Caco-2 (cell line): ENCODE measurements at regions of chr12 and their contacts with region 1.

Region 1: DNA sequence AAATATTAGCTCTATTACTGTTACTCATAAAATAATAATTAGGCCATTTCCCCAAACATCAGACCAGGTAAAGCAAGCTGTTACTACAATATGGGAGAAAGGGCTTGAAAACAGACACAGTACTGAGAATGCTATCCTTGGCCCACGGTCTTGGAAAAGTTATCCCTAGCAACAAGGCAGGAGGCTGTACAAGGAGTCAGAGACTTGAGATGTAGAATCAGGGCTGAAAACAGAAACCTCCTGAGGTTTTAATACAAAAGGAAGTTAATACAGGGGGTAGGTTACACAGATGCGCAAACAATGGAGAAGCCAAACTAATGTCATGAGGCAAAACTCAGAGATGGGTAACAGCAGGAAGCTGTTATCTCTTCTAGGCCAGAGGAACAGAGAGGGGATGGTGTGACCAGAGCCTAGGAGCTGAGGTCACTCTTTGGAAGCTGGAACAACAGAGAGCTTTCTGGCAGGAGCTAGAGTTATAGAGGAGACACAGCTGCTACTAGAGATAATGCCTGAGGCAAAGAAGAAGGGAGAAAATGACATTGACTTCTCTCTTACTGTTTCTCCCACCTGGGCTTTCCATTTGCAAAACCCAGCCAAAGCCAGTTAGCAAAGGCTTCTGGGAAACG is 248.8 kb downstream of the SUDS3 start:
- DNase-seq: no peak
- H3K4me3 ChIP-seq: no peak overlapping the region
- H3K4me3 Mint-ChIP-seq: no peak overlapping the region
- H3K27ac Mint-ChIP-seq: no peak overlapping the region
- H3K4me1 ChIP-seq: no peaks in the 10 kb centered on the region
- H3K4me1 Mint-ChIP-seq: no peaks in the 10 kb centered on the region
- H3K27me3 ChIP-seq: no peaks in the 10 kb centered on the region
- H3K27me3 Mint-ChIP-seq: peaks cover 14% of the 10 kb centered on the region
- CTCF ChIP-seq: no peak

Region 2: GRCh38 chr12:118404876-118405521 is 220.2 kb before region 1 on chr12:
- CTCF ChIA-PET with region 1: no interaction called
- POLR2A ChIA-PET with region 1: no interaction called
- intact Hi-C with region 1: loop called (anchors 1 kb)
- DNase-seq: peak; percentile 55 to 58
- H3K4me3 ChIP-seq: no peak overlapping the region
- H3K4me3 Mint-ChIP-seq: no peak overlapping the region
- H3K27ac Mint-ChIP-seq: no peak overlapping the region
- H3K4me1 ChIP-seq: no peaks in the 10 kb centered on the region
- H3K4me1 Mint-ChIP-seq: no peaks in the 10 kb centered on the region
- H3K27me3 ChIP-seq: no peaks in the 10 kb centered on the region
- H3K27me3 Mint-ChIP-seq: no peaks in the 10 kb centered on the region
- CTCF ChIP-seq: peak; percentile 63 to 75